Mammary epithelial cell (primary cell): ENCODE measurements at regions of chr16 and their contacts with region 1.

Region 1: DNA sequence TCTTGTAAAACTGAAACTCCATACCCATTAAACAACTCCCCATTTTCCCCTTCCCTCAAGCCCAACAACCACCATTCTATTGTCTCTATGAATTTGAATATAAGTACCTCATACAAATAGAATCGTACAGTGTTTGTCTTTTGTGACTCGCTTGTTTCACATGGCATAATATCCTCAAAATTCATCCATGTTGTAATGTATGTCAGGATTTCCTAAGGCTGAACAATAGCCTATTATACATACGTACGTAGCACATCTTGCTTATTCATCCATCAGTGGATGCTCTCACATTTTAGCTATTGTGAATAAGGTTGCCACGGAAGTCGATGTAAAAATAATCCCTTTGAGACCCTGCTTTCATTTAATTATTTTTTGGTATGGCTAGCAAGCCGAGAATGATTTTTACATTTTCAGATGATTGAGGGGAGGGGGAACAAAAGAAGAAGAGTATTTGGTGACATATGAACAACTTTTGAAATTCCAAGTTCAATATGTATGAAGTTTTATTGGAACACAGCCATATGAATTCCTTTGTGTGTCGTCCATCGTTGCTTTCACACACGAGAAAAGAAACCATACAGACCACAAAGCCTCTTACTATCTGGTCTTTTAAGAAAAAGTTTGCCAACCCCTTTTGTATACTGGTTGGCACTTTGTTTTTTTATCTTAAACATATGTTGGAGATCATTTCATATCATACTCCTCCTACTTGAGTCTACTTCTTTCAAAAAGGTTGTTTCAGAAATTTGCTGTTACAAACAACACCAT is 371.2 kb downstream of the NPIPA8 start:
- DNase-seq: peak; percentile 1
- H3K4me3 ChIP-seq: no peak overlapping the region
- H3K27ac ChIP-seq: no peak overlapping the region
- H3K4me1 ChIP-seq: no peaks in the 10 kb centered on the region
- H3K27me3 ChIP-seq: no peaks in the 10 kb centered on the region
- CTCF ChIP-seq: no peak

Region 2: GRCh38 chr16:18018376-18018775 is 53.1 kb after region 1 on chr16:
- CTCF ChIA-PET with region 1: no interaction called
- dilution Hi-C with region 1: loop called (anchors 5 kb)
- in situ Hi-C with region 1: no loop called
- intact Hi-C with region 1: no loop called
- DNase-seq: no peak
- H3K4me3 ChIP-seq: no peak overlapping the region
- H3K27ac ChIP-seq: no peak overlapping the region
- H3K4me1 ChIP-seq: no peaks in the 10 kb centered on the region
- H3K27me3 ChIP-seq: no peaks in the 10 kb centered on the region
- CTCF ChIP-seq: no peak